H1 (cell line): ENCODE measurements at regions of chr16 and their contacts with region 1.

Region 1: DNA sequence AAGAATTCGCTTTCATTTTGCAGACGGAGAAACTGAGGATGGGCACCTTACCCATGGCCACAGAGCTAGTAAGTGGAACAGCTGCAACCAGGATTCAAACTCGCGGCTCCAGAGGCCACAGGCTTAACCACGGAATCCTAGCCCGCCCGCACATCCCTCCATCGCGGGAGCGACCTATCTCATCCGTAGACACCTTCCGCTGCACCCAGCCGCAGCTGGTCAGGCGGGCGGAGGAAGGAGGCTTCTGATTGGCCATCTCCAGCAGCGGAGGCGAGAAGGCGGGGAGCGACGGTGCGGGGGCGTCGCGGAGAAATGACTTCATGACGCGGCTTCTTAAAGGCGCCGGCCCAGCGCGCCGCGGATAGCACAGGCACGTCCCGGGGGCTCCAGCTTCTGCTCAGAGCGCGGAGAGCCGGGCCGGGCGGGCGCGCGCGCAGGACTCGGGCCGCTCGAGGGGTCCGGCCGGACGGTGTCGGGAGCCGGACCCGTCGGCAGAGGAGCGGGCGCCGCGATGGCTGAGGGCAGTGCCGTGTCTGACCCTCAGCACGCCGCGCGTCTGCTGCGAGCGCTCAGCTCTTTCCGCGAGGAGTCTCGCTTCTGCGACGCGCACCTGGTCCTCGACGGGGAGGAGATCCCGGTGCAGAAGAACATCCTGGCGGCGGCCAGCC is at the start of gene GAN:
- DNase-seq: peak; percentile 83 to 95
- H3K4me3 ChIP-seq: peak within 1 kb of the TSS; percentile 94 to 98 (median 94)
- H3K27ac ChIP-seq: peak within 1 kb of the TSS; percentile 85
- H3K4me1 ChIP-seq: peaks cover 0 to 13% (median 6%) of the 10 kb centered on the region in 4 experiments; a peak in 4 of 7 replicates
- H3K27me3 ChIP-seq: no peaks in the 10 kb centered on the region
- CTCF ChIP-seq: 0 out of 4 replicates have a peak, but pooled peaks of 1 of the 3 experiments have one; percentile 3
- EP300 ChIP-seq: no peak
- POLR2A ChIP-seq: peak; percentile 86 to 91
- RAD21 ChIP-seq: 0 out of 4 replicates have a peak, but pooled peaks of 1 of the 2 experiments have one; percentile 1
- total RNA-seq, gene GAN: 23.9 and 25.6 TPM in 2 replicates

Region 2: GRCh38 chr16:81279395-81279794 is 35.3 kb before region 1 on chr16:
- CTCF ChIA-PET with region 1: interaction called, 6 read pairs
- POLR2A ChIA-PET with region 1: interaction called, 10 read pairs
- DNase-seq: no peak
- H3K4me3 ChIP-seq: no peak overlapping the region
- H3K27ac ChIP-seq: no peak overlapping the region
- H3K4me1 ChIP-seq: peaks cover 0 to 3% (median 0%) of the 10 kb centered on the region in 4 experiments; a peak in 1 of 7 replicates
- H3K27me3 ChIP-seq: no peaks in the 10 kb centered on the region
- CTCF ChIP-seq: no peak
- EP300 ChIP-seq: no peak
- POLR2A ChIP-seq: no peak
- RAD21 ChIP-seq: no peak

Region 3: DNA sequence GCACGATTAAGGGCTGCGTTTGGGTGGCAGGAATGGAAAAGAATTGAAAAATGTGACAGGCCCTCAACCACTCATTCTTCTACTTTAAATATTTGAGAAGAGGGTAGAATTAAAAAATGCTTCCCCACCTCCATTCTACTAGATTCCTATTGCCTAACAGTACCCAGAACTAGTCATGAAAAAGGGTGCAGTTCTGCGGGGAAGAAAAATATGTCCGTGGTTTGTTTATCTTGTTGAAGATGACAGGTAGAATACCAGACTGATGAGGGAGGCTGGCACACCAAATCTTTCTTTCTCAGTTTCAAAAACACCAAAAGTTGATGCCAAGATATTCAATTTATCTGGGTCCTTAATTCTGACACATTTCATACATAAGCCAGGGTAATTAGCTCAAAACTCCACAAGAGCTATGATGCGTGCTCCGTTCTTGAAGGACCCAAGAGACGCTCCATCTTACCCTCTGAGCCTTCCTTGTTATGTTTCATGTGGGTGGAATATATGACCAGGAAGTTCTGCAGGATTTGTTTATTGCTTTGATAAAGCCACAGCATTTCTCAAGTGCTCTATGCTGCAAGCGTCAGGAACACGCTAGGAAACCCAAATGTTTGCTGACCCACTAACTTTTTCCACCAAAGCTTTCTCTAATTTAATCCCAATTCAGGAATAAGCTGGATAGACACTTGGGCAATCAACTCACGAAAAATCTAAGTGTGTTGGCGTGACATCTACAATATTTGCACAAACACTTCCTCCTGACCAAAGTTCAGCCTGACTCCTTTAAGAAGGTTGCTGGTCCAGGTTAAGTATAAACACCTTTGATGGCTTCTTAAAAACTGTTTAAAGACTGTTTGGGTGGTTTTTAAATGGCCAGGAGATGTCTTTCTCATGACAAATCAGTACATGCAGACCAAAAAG is 20.6 kb before region 1 on chr16:
- CTCF ChIA-PET with region 1: interaction called, 4 read pairs
- POLR2A ChIA-PET with region 1: interaction called, 23 read pairs
- DNase-seq: no peak
- H3K4me3 ChIP-seq: no peak overlapping the region
- H3K27ac ChIP-seq: no peak overlapping the region
- H3K4me1 ChIP-seq: no peaks in the 10 kb centered on the region
- H3K27me3 ChIP-seq: no peaks in the 10 kb centered on the region; a peak in 2 of 7 replicates
- CTCF ChIP-seq: no peak
- EP300 ChIP-seq: no peak
- POLR2A ChIP-seq: no peak
- RAD21 ChIP-seq: no peak

Region 4: DNA sequence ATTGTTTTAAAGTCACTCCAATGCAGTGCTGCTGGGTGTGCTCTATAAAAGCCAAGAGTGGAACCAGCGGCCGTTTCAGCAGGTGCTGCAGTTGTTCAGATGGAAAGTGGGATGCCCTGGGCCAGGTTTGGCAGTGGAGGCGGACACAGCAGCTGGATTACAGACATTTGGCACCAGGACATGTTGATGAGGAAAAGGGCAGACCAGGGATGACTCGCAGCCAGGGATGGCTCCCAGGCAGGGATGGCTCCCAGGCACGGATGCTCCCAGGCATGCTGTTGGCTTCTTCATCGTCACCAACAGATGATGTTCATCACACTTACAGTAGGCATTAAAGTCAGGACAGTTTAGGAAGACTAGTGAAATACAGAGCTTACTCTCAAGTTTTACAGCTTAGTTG is 10.1 kb after region 1 on chr16:
- CTCF ChIA-PET with region 1: no interaction called
- POLR2A ChIA-PET with region 1: interaction called, 18 read pairs
- DNase-seq: no peak
- H3K4me3 ChIP-seq: no peak overlapping the region
- H3K27ac ChIP-seq: no peak overlapping the region
- H3K4me1 ChIP-seq: no peaks in the 10 kb centered on the region
- H3K27me3 ChIP-seq: no peaks in the 10 kb centered on the region
- CTCF ChIP-seq: no peak
- EP300 ChIP-seq: no peak
- POLR2A ChIP-seq: no peak
- RAD21 ChIP-seq: no peak

Region 5: DNA sequence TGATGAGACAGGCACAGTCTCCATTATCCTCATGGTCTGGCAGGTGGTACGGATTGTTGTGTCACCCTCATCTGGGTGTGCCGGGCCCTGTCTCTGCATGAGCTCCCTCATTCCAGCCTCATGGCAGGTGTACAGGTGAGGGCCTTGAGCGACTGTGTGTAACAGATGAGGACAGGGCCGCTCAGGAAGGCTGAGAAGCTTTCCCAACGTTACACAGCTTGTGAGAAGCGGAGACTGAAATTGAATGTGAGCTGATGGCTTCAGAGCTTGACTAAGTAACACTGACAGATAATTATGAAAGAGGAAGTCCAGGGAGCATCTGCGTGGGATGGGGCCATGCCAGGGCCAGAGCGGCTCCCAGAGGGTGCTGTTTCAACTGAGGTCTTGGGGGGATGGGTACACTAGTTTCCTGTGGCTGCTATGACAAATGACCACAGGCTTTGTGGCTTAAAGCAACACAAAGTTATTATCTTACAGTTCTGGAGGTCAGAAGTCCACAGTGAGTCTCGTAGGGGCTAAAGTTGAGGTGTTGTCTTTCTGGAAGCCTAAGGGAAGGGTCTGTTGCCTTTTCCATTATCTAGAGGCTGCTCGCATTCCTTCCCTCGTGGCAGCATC is 166.6 kb after region 1 on chr16:
- CTCF ChIA-PET with region 1: no interaction called
- POLR2A ChIA-PET with region 1: no interaction called
- DNase-seq: no peak
- H3K4me3 ChIP-seq: no peak overlapping the region
- H3K27ac ChIP-seq: no peak overlapping the region
- H3K4me1 ChIP-seq: peaks cover 4 to 29% (median 7%) of the 10 kb centered on the region in 4 experiments
- H3K27me3 ChIP-seq: no peaks in the 10 kb centered on the region
- CTCF ChIP-seq: no peak
- EP300 ChIP-seq: no peak
- POLR2A ChIP-seq: no peak
- RAD21 ChIP-seq: no peak